ENCODE measurements at regions of chr11 and their contacts with region 1.

Region 1: DNA sequence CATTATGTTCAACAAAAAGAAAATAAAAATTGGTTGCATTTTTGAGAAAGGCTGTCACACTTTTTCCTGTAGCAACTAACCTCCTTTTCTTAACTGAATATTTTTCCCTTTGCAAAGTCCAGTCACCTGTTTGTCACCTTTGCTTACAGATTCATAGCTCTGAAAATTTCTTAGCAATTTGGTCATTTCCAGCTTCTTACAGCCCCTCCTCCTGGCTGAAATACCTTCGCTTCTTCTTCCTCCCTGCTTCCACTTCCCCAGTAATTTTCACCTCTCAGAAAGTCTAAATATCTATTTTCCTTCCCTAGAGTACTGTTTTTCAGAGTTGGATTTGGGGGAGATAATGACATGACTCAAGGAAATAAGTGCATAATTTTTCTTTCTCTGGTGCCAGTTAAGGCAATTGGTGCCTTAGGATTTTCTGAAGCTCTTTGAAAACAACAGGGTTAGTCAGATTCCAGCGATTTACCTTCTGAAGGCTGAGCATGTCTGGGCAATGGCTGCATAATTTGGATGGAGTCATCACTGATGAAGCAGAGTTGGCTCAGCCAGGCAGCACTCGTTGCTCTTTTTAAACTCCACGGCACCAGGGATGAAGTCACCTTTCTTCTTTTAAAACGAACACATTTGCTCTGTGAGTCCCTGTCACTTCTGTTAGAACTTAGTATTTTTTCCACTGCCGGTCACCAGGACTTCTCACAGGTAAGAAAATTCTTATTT is 62.1 kb upstream of the AMOTL1 start:
- DNase-seq: peak; percentile 95
- H3K4me3 ChIP-seq: peak overlapping the region; percentile 61 to 87 (median 73)
- H3K27ac ChIP-seq: peak overlapping the region; percentile 99
- H3K4me1 ChIP-seq: peaks cover 29% of the 10 kb centered on the region
- H3K27me3 ChIP-seq: no peaks in the 10 kb centered on the region
- CTCF ChIP-seq: peak in 1 of 2 donors; percentile 12

Region 2: GRCh38 chr11:94593030-94593429 is 113.0 kb before region 1 on chr11:
- CTCF ChIA-PET with region 1: no interaction called
- dilution Hi-C with region 1: no loop called
- in situ Hi-C with region 1: no loop called
- intact Hi-C with region 1: no loop called
- DNase-seq: peak; percentile 9
- H3K4me3 ChIP-seq: no peak overlapping the region
- H3K27ac ChIP-seq: no peak overlapping the region
- H3K4me1 ChIP-seq: no peaks in the 10 kb centered on the region
- H3K27me3 ChIP-seq: peaks cover 7% of the 10 kb centered on the region
- CTCF ChIP-seq: no peak

Region 3: DNA sequence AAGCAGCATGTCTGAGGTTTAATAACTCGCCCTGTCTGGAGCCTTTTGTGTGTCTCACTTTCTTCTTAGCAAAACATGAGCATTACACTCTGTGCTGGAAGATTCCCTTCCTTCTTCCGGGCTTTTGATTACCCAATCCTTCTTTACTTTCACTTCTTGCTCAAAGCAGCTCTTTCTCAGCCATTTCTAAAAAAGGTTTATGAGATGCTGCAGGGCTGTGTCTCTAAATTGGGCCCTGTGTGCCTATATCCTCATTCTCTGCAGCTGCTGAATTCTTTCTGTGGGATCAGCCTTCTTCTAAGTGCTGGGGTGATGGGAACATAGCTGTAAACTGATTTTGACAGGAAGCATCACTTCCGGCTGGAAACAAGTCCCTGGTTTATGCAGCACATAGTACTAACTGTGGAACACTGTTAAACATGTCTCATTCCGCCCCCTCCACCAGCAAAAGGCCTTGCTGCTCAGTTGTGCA is 67.1 kb before region 1 on chr11:
- CTCF ChIA-PET with region 1: no interaction called
- dilution Hi-C with region 1: no loop called
- in situ Hi-C with region 1: no loop called
- intact Hi-C with region 1: loop called (anchors 5 kb)
- DNase-seq: peak; percentile 47
- H3K4me3 ChIP-seq: peak overlapping the region in 1 of 3 experiments; percentile 24
- H3K27ac ChIP-seq: no peak overlapping the region
- H3K4me1 ChIP-seq: peaks cover 18% of the 10 kb centered on the region
- H3K27me3 ChIP-seq: peaks cover 2% of the 10 kb centered on the region
- CTCF ChIP-seq: no peak

Region 4: DNA sequence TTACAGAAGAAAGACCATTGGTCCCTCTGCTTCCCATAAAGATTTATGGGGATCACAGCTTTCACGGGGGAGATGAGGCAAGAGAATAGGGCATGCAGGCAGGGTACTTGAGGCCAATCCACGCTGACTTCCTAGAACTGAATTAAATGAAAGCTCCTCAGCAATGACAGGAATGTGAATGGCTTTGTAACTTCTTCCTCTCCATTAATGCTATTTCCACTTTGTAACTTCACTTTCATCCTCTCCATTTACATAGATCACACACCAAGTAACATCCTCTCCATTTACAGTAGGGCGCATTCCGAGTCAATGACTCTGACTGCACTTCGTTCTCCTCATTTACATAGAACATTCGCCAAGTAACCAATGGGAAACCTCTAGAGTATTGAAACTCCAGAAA is 49.1 kb before region 1 on chr11:
- CTCF ChIA-PET with region 1: no interaction called
- dilution Hi-C with region 1: no loop called
- in situ Hi-C with region 1: no loop called
- intact Hi-C with region 1: no loop called
- DNase-seq: no peak
- H3K4me3 ChIP-seq: no peak overlapping the region
- H3K27ac ChIP-seq: no peak overlapping the region
- H3K4me1 ChIP-seq: no peaks in the 10 kb centered on the region
- H3K27me3 ChIP-seq: no peaks in the 10 kb centered on the region
- CTCF ChIP-seq: no peak

Region 5: GRCh38 chr11:94672636-94673035 is 33.4 kb before region 1 on chr11:
- CTCF ChIA-PET with region 1: no interaction called
- dilution Hi-C with region 1: no loop called
- in situ Hi-C with region 1: no loop called
- intact Hi-C with region 1: no loop called
- DNase-seq: no peak
- H3K4me3 ChIP-seq: no peak overlapping the region
- H3K27ac ChIP-seq: no peak overlapping the region
- H3K4me1 ChIP-seq: peaks cover 53% of the 10 kb centered on the region
- H3K27me3 ChIP-seq: no peaks in the 10 kb centered on the region
- CTCF ChIP-seq: no peak

Region 6: DNA sequence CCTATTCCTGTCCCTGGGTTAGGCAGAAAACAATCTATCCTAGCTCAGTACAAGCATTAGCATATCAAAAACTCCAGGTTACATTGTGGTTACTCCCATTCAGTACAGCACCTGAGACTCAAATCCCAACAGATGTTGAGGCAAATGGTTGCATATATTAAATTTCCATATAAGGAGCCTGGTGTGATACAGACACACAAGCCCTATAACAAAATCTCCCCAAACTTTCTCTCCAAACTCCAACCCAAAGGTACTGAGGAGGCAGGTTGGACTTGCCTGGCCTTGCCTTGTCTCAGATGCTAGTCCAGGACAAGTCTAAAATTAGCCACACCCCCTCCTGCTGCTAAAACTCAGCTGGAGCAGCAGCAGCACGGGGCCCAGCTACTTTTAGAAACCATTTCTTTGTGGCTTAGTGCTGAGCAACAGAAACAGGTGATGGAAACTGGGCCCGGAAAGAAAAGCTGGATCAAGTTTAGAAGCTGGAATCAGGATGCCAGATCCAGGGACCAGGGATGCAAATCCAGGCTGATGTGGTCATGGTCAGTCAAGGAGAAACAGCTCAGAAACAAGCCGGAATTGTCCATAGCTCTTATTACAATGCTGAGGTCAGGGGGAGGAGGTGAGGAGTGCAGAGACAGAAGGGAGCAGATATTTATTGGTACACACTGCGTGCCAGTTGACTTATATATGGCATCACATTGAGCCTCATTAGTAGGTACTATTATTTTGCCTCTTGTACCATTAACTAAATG is 11.6 kb before region 1 on chr11:
- CTCF ChIA-PET with region 1: no interaction called
- dilution Hi-C with region 1: no loop called
- in situ Hi-C with region 1: no loop called
- intact Hi-C with region 1: loop called (anchors 1 kb)
- DNase-seq: peak; percentile 78
- H3K4me3 ChIP-seq: no peak overlapping the region
- H3K27ac ChIP-seq: peak overlapping the region; percentile 23
- H3K4me1 ChIP-seq: peaks cover 20% of the 10 kb centered on the region
- H3K27me3 ChIP-seq: no peaks in the 10 kb centered on the region
- CTCF ChIP-seq: no peak

Region 7: GRCh38 chr11:94747146-94748080 is 41.4 kb after region 1 on chr11:
- CTCF ChIA-PET with region 1: no interaction called
- dilution Hi-C with region 1: no loop called
- in situ Hi-C with region 1: no loop called
- intact Hi-C with region 1: loop called (anchors 1 kb)
- DNase-seq: peak; percentile 97
- H3K4me3 ChIP-seq: no peak overlapping the region
- H3K27ac ChIP-seq: peak overlapping the region; percentile 99
- H3K4me1 ChIP-seq: peaks cover 64% of the 10 kb centered on the region
- H3K27me3 ChIP-seq: no peaks in the 10 kb centered on the region
- CTCF ChIP-seq: no peak

Region 8: GRCh38 chr11:94826415-94826814 is 120.4 kb after region 1 on chr11:
- CTCF ChIA-PET with region 1: no interaction called
- dilution Hi-C with region 1: no loop called
- in situ Hi-C with region 1: no loop called
- intact Hi-C with region 1: loop called (anchors 10 kb)
- DNase-seq: no peak
- H3K4me3 ChIP-seq: no peak overlapping the region
- H3K27ac ChIP-seq: no peak overlapping the region
- H3K4me1 ChIP-seq: peaks cover 12% of the 10 kb centered on the region
- H3K27me3 ChIP-seq: no peaks in the 10 kb centered on the region
- CTCF ChIP-seq: no peak

Region 9: DNA sequence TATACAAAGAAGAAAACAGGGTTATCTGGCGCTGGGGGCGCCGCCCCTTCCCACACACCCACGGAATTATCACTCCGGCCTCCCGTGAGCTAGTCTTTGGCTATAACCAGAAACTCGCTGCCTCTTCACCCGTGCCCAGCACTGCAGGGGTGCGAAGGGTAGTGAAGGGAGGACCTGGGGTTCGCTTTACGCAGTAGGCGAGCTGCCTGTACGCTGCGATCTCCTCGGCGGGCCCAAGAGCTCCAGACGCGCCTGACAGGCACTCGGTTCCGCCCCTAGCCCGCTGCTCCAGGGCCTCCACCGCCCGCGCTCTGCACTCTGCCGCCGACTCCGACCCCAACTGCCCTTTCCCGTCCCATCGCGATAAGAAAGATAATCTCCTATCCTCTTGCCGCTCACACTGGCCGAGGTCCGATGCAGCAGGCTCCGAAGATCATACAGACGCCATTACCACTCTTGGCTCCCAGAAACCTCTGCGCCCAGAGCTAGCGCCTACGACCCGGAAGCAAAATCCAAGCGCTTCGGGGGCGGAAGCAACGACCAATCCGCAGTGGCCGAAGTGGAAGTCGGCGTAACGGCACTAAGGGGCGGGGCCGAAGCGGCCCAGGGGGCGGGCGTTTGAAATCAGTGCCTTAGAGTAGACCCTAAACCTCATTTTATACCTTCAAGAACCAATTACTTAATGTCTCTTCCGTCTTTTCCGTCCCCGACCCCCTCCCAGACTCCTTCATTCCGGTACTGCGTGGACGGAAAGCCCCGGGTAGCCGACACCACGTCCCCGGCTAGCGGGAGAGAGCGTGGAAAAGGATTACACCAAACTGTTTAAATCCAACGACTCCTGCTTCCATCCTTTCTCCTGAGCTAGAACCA is 267.3 kb after region 1 on chr11 and contains the starts of genes CWC15 and KDM4D:
- CTCF ChIA-PET with region 1: no interaction called
- dilution Hi-C with region 1: no loop called
- in situ Hi-C with region 1: no loop called
- intact Hi-C with region 1: loop called (anchors 1 kb)
- DNase-seq: peak; percentile 90
- H3K4me3 ChIP-seq: peak within 1 kb of the TSS; percentile 86 to 99 (median 89)
- H3K27ac ChIP-seq: peak within 1 kb of the TSS; percentile 80
- H3K4me1 ChIP-seq: peaks cover 9% of the 10 kb centered on the region
- H3K27me3 ChIP-seq: no peaks in the 10 kb centered on the region
- CTCF ChIP-seq: no peak
- total RNA-seq, gene CWC15: 27.5 to 46.5 TPM
- total RNA-seq, gene KDM4D: 1.0 TPM